ENCODE measurements at regions of chr13 and their contacts with region 1.

Region 1: GRCh38 chr13:110116072-110116487 is 190.9 kb downstream of the COL4A1 start:
- ATAC-seq: peak in 3 of 8 experiments; percentile 43 to 88 (median 47)
- H3K4me3 ChIP-seq: no peak overlapping the region
- H3K27ac ChIP-seq: no peak overlapping the region
- H3K4me1 ChIP-seq: peaks cover 0 to 2% of the 10 kb centered on the region in 2 donors

Region 2: GRCh38 chr13:108961542-108962125 is 1154.4 kb before region 1 on chr13:
- in situ Hi-C with region 1: loop called in 6 of 9 experiments (anchors 10 to 25 kb)
- ATAC-seq: peak; percentile 26 to 76 (median 54)
- H3K4me3 ChIP-seq: no peak overlapping the region
- H3K27ac ChIP-seq: no peak overlapping the region
- H3K4me1 ChIP-seq: peaks cover 0 to 6% of the 10 kb centered on the region in 2 donors

Region 3: DNA sequence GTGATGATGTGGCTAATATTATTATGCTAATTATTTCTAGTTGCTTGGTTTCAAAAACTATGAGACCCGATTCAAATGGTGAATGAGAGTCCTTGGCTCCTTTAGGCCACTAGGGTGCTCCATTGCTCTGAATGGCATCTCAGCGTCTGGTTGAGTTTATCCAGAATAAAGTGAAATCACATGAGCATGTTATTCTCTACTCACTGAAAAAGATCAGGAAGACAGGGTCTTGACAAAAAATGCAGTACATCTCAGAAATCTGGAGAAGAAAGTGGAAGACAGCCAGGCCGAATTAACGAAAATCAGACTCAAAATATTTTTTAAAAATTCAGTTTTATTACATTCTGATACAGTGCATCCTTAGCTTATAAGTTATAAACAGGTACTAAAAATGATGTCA is 970.4 kb before region 1 on chr13:
- in situ Hi-C with region 1: loop called in 1 of 9 experiments (anchors 25 kb)
- ATAC-seq: peak in 5 of 8 experiments; percentile 69 to 90 (median 84)
- H3K4me3 ChIP-seq: no peak overlapping the region
- H3K27ac ChIP-seq: no peak overlapping the region
- H3K4me1 ChIP-seq: peaks cover 24 to 43% of the 10 kb centered on the region in 2 donors

Region 4: DNA sequence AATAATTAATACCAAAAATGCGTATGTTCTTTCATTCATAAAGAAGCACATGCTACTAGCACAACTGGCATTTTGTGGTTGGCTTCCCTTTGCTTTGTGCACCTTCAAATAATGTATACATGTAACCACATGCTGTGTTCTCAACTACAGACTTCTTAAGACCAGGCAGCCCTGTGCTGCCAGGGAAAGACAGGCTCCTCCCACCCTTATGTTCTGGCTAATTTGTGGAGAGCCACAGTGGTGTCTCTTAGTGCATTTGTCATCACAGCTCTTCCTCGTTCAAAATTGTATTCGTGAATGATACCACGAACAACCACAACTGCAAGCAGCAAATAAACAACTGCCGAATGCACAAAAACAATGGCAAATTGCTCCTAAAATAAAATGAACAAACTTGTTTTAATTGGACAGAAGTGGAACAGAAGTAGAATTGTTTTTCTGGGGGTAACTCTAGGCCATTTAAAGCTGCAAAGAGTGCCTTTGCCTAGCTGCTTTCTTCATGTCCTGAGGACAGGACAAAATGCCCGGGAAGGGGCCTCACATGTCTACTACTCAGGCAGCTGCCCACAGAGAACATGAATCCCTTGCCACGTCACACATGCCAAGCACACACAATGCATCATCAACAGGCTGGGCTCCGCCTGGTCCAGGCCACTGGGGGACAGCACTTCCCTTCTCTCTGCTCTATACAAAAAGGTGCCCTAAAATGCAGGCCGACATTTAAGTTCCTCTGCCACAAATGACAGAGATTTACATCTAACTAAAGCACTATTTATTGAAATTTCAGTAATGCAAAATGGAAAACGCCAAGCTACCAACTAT is 351.4 kb before region 1 on chr13:
- in situ Hi-C with region 1: loop called in 1 of 9 experiments (anchors 25 kb)
- ATAC-seq: peak in 6 of 8 experiments; percentile 43 to 86 (median 81)
- H3K4me3 ChIP-seq: no peak overlapping the region
- H3K27ac ChIP-seq: no peak overlapping the region
- H3K4me1 ChIP-seq: peaks cover 21 to 45% of the 10 kb centered on the region in 2 donors

Region 5: DNA sequence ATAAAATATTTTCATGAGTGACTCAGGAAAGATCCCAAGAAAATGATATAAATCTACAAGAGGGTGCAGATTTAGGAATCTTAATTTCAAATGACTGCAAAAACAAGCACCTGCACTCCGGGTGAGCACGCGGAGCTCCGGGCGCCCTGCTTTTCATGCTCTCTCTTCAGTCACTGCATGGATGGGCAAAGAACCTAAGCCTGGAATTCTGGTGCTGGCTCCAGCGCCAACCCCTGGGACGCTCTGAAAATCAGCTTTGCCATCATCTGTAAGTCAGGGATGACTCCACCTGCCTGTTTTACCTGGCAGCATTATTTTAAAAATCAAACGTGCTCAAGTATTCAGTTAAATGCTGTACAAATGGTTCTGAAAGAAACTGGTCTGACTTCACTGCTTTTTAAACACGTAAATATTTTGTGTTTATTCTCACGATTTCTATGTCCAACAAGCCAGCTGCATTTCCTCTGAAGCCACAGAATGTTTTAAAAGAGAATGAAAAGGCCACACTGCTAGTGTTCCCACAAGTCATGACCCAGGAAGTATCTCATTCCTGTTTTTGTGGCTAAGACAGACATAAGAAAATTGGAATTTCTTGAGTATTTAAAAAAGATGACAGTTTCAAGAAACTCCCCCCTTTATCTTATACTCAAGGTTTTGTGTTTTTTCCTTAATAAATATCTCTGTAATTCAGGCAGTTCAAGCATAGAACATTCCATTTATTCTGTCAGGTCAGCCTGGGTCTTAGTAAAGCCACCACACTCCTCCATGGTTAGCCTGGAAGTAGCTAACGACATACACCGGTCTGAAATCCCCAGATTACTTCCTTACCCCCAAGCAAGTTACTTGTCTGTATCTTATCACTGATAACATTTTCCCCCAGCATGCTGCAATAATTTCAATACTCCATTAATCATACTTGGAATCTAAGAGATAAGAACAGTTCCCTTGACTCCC is 109.8 kb after region 1 on chr13:
- in situ Hi-C with region 1: no loop called
- ATAC-seq: no peak
- H3K4me3 ChIP-seq: no peak overlapping the region
- H3K27ac ChIP-seq: no peak overlapping the region
- H3K4me1 ChIP-seq: no peaks in the 10 kb centered on the region

Region 6: GRCh38 chr13:110499621-110500281 is 383.7 kb after region 1 on chr13:
- in situ Hi-C with region 1: no loop called
- ATAC-seq: peak in 7 of 8 experiments; percentile 13 to 85 (median 57)
- H3K4me3 ChIP-seq: no peak overlapping the region
- H3K27ac ChIP-seq: no peak overlapping the region
- H3K4me1 ChIP-seq: no peaks in the 10 kb centered on the region